ENCODE measurements at regions of chr1 and their contacts with region 1.

Region 1: DNA sequence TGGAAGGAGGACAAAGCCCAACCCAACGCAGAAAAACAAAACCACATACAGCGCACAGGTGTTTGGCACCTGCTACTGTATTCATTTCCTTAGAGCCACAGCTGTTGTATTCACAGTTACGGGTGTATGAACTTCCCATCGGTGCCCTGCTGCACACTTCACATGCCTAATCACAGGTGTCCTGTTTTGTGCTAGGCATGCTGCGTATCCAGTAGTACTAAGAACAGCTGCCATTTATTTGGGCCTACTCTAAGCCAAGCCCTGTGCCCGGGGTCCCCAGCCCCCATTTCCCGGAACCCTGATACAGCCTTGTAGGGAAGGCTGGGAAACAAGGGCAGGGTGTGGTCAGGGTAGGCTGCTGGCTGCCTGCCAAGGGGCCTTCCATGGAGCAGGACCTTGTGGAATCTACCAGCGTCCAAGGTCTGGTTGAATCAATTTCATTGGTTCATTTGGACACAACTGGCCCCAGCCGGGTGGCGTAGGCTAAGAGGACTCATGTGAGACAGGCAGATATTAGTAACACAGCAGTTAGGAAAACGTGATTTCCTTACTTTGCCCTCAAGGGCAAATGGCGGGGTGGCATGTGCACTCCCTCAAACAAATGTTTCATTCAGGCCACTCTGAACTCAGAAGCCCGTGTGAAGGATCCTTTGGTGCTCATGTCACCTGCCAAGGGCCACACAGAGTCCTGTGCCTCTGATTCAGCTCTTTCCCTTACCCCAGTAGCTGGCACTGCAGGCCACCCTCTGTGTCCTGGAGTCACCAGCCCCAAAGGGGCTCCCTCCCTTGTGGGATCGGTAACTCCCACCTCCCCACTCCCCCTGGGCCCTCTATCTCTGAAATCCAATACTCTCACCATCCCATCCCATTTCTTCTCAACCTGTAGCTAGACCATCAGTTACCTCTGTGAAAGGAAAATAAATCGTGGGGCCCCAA is 986 bp upstream of the RNF186 start:
- DNase-seq: no peak
- H3K4me3 ChIP-seq: no peak overlapping the region
- H3K27ac ChIP-seq: peak overlapping the region; percentile 65 to 72
- H3K4me1 ChIP-seq: peaks cover 0 to 7% of the 10 kb centered on the region in 2 donors
- H3K27me3 ChIP-seq: no peaks in the 10 kb centered on the region
- CTCF ChIP-seq: no peak
- POLR2A ChIP-seq: no peak

Region 2: DNA sequence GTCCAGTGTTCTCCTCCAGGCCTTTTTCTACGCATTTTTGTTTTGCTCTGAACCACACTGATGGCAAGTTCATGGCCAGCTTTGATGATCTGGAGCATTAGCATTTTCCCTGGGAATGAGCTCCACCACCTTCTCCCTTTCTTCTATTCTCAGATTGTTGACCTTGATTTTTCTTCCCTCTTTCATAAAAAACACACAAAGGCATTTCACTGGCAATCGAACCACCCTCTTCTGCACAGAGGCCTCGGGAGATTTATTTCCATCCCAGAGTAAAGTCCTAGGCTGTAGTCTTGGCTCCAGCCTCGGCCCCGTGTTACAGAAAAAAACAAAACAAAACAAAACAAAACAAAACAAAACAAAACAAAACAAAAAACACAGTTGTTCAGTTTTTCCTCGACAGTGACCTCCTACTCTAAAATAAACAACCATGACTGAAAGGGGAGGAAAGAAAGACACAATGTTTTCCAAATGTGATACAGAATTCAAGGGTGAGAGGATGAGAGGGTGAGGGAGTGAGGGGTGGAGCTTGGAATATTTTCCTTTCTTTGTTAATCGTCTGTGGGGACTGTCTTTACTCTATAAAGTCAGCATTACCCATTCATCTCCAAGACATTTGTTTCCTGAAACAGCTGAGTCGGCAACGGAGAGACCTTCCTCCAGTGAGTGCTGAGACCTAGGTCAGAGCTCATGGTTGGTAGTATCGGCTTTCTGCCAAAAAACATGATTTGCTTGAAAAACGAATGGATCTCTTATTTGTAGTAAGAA is 28.8 kb after region 1 on chr1:
- intact Hi-C with region 1: no loop called
- DNase-seq: no peak
- H3K4me3 ChIP-seq: no peak overlapping the region
- H3K27ac ChIP-seq: no peak overlapping the region
- H3K4me1 ChIP-seq: no peaks in the 10 kb centered on the region
- H3K27me3 ChIP-seq: no peaks in the 10 kb centered on the region
- CTCF ChIP-seq: no peak
- POLR2A ChIP-seq: no peak

Region 3: DNA sequence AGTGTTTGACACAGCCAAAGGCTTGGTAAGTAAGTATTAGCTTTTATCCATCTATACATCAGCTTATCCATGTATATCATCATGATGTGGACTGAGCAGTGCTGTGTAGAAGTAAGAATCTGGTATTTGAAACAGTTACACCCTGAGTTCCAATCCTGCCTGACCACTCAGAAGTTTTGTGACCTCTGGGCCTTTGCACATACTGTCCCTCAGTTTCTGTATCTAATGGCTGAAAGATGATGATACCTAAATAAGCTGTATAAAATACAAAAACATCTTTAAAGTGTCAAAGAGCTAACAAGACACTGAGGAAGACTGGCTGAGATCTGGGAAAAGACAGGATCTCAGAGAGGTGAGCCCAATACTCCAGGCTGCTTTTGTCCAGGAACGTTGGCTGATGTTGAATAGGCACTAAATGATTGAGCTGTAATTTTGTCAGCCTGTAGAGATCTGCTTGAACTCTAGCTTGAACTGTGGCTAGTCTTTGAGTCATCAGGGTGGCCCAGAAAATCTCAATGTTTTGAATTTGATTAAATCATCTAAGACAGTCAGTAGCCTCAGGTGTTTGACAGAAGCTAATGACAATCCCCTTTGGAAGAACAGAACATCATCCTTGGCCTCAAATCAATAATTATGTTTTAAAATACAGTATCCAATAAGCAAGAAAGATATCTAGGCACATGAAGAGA is 45.9 kb after region 1 on chr1:
- intact Hi-C with region 1: loop called (anchors 2 kb)
- DNase-seq: no peak
- H3K4me3 ChIP-seq: no peak overlapping the region
- H3K27ac ChIP-seq: no peak overlapping the region
- H3K4me1 ChIP-seq: no peaks in the 10 kb centered on the region
- H3K27me3 ChIP-seq: no peaks in the 10 kb centered on the region
- CTCF ChIP-seq: no peak
- POLR2A ChIP-seq: no peak

Region 4: GRCh38 chr1:20279509-20279908 is 463.4 kb after region 1 on chr1:
- intact Hi-C with region 1: no loop called
- DNase-seq: peak in 1 of 2 donors; percentile 23
- H3K4me3 ChIP-seq: no peak overlapping the region
- H3K27ac ChIP-seq: no peak overlapping the region
- H3K4me1 ChIP-seq: no peaks in the 10 kb centered on the region
- H3K27me3 ChIP-seq: no peaks in the 10 kb centered on the region
- CTCF ChIP-seq: no peak
- POLR2A ChIP-seq: no peak